ENCODE measurements at regions of chr1 and their contacts with region 1.

Region 1: GRCh38 chr1:183804881-183805841 is at the start of gene RGL1:
- DNase-seq: peak; percentile 94
- H3K4me3 ChIP-seq: peak within 1 kb of the TSS; percentile 54 to 75 (median 66)
- H3K27ac ChIP-seq: peak within 1 kb of the TSS; percentile 83 to 94 (median 90)
- H3K4me1 ChIP-seq: peaks cover 0 to 44% (median 22%) of the 10 kb centered on the region in 4 donors
- H3K27me3 ChIP-seq: no peaks in the 10 kb centered on the region
- CTCF ChIP-seq: no peak
- EP300 ChIP-seq: no peak
- POLR2A ChIP-seq: peak; percentile 22 to 28
- total RNA-seq, gene RGL1: 23.8 to 42.1 (median 30.8) TPM

Region 2: DNA sequence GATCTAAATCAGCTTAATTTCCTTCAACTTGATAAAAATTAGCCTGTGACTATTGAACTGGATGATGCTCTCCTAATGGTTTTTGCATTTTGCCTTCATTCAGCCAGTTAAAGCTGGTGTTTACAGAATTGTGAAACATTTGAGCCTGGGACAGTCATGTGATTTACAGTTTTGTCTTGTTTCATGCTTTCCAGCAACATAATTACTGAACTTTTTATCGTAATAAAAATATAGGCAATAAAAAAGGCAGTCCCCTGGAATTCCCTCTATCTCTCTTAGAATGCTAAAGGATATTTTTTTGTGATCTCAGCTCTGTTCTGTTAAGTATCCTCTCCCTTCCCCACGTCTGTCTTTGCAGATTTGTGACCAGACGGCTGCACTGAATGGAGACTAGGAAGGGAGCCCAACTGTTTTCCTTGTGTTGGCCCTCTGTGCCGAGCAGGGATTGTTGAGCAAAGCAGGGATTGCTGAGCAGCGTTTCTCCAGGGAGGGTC is 70.6 kb before region 1 on chr1:
- intact Hi-C with region 1: loop called (anchors 5 kb)
- DNase-seq: peak; percentile 79
- H3K4me3 ChIP-seq: no peak overlapping the region
- H3K27ac ChIP-seq: peak overlapping the region; percentile 23 to 57 (median 40)
- H3K4me1 ChIP-seq: peaks cover 0 to 27% (median 21%) of the 10 kb centered on the region in 4 donors
- H3K27me3 ChIP-seq: no peaks in the 10 kb centered on the region
- CTCF ChIP-seq: no peak
- EP300 ChIP-seq: no peak
- POLR2A ChIP-seq: no peak

Region 3: GRCh38 chr1:183859831-183860230 is 54.7 kb after region 1 on chr1:
- intact Hi-C with region 1: no loop called
- DNase-seq: no peak
- H3K4me3 ChIP-seq: no peak overlapping the region
- H3K27ac ChIP-seq: no peak overlapping the region
- H3K4me1 ChIP-seq: peaks cover 0 to 13% (median 9%) of the 10 kb centered on the region in 4 donors
- H3K27me3 ChIP-seq: no peaks in the 10 kb centered on the region
- CTCF ChIP-seq: no peak
- EP300 ChIP-seq: no peak
- POLR2A ChIP-seq: no peak

Region 4: DNA sequence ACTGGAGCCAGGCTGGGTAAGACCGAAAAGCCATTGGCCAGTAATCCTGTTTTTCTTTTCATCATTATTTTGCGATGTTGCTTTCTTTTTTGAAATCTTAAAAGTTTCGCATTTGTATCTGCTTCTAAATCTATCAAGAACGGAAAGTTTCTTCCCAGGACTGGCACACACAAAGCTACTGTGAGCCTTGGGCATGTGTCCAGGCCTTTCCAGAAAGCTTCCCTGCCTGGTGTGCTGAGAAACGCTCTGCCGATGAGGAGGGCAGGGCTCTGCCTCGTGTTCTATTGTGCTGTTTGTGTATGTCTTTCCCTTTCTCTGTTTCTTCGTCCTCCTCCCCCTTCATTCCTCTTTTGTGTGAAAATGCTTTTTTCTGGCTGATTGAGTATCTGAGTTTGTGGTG is 72.2 kb after region 1 on chr1:
- intact Hi-C with region 1: loop called (anchors 2 kb)
- DNase-seq: peak; percentile 90
- H3K4me3 ChIP-seq: peak overlapping the region in 3 of 4 donors; percentile 21 to 39 (median 30)
- H3K27ac ChIP-seq: peak overlapping the region; percentile 49 to 82 (median 81)
- H3K4me1 ChIP-seq: peaks cover 0 to 88% (median 70%) of the 10 kb centered on the region in 4 donors
- H3K27me3 ChIP-seq: no peaks in the 10 kb centered on the region
- CTCF ChIP-seq: no peak
- EP300 ChIP-seq: no peak
- POLR2A ChIP-seq: no peak

Region 5: GRCh38 chr1:183901748-183902330 is 96.7 kb after region 1 on chr1:
- intact Hi-C with region 1: loop called (anchors 5 kb)
- DNase-seq: no peak
- H3K4me3 ChIP-seq: no peak overlapping the region
- H3K27ac ChIP-seq: peak overlapping the region in 2 of 4 donors; percentile 6 to 24
- H3K4me1 ChIP-seq: peaks cover 0 to 34% (median 11%) of the 10 kb centered on the region in 4 donors
- H3K27me3 ChIP-seq: no peaks in the 10 kb centered on the region
- CTCF ChIP-seq: no peak
- EP300 ChIP-seq: no peak
- POLR2A ChIP-seq: no peak

Region 6: DNA sequence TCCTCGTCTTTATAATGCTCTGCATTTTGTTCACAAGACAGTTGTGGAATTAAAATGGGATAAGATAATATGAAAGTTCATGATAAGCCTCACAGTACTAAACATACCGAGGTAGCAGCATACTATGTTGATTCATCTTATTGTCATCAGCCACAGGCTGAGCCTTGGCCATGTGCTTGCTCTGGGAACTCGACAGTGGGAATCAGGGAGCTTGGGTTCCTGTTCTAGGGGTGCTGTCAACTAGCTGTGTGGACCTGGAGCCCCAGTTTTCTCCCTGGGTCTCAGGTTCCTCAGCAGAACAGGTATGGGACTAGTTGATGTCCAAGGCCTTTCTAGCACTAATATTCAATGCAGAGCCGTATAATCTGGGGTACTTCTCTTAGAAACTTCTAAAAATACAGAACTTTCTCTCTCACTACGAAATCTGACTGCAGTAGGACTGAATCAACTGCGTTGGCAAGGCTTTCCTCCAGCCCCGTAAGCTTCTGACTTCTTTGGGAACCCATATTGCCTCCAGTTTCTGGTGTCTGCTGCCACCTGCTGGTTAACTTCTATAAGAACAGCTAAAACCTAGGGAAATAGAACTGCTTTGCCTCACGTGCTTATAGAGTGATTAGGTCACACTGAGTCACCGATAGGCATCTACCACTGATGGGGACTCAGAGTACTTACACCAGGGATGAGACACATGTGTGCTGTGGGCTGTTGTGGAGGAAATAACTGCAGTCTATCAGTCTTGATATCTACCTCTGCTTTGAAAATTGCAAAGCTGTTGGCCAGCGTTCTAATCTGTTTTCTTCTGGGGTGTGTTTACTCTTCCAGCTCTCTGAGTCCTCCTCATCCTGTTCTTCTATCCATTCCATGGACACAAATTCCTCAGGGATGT is 110.7 kb after region 1 on chr1:
- intact Hi-C with region 1: loop called (anchors 2 kb)
- DNase-seq: peak; percentile 92
- H3K4me3 ChIP-seq: no peak overlapping the region
- H3K27ac ChIP-seq: peak overlapping the region; percentile 58 to 74 (median 70)
- H3K4me1 ChIP-seq: peaks cover 0 to 33% (median 29%) of the 10 kb centered on the region in 4 donors
- H3K27me3 ChIP-seq: no peaks in the 10 kb centered on the region
- CTCF ChIP-seq: peak; percentile 82 to 86 (median 84)
- EP300 ChIP-seq: no peak
- POLR2A ChIP-seq: no peak